HEK293 (cell line): ENCODE measurements at regions of chr9 and their contacts with region 1.

Region 1: GRCh38 chr9:35664531-35665470 is at the start of gene ARHGEF39:
- H3K4me3 ChIP-seq: peak within 1 kb of the TSS; percentile 75
- H3K27ac ChIP-seq: peak within 1 kb of the TSS; percentile 64; the same call in 1 of the 2 replicates
- H3K4me1 ChIP-seq: no peaks in the 10 kb centered on the region
- CTCF ChIP-seq: peak; percentile 62; the same call in 1 of the 2 replicates

Region 2: DNA sequence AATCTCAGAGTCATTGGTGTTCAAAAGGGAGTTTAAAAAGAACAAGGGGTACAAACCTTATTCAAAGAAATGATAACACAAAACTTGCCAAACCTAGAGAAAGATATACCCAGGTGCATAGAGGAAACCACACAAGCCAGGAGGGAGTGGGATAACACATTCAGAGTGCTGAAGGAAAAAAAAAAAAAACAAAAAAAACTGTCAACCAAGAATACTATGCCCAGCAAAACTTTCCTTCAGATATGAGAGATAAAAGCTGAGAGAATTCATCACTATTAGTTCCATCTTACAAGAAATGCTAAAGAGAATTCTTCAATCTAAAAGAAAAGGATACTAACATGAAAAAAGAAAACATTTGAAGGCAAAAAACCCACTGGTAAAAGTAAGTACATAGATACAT is 71.2 kb before region 1 on chr9:
- CTCF ChIA-PET with region 1: no interaction called
- POLR2A ChIA-PET with region 1: no interaction called
- H3K4me3 ChIP-seq: no peak overlapping the region
- H3K27ac ChIP-seq: no peak overlapping the region
- H3K4me1 ChIP-seq: no peaks in the 10 kb centered on the region
- CTCF ChIP-seq: no peak

Region 3: GRCh38 chr9:35603987-35604577 is 60.7 kb before region 1 on chr9:
- CTCF ChIA-PET with region 1: no interaction called
- POLR2A ChIA-PET with region 1: no interaction called
- H3K4me3 ChIP-seq: peak overlapping the region; percentile 54
- H3K27ac ChIP-seq: peak overlapping the region; percentile 43
- H3K4me1 ChIP-seq: no peaks in the 10 kb centered on the region
- CTCF ChIP-seq: peak; percentile 96

Region 4: DNA sequence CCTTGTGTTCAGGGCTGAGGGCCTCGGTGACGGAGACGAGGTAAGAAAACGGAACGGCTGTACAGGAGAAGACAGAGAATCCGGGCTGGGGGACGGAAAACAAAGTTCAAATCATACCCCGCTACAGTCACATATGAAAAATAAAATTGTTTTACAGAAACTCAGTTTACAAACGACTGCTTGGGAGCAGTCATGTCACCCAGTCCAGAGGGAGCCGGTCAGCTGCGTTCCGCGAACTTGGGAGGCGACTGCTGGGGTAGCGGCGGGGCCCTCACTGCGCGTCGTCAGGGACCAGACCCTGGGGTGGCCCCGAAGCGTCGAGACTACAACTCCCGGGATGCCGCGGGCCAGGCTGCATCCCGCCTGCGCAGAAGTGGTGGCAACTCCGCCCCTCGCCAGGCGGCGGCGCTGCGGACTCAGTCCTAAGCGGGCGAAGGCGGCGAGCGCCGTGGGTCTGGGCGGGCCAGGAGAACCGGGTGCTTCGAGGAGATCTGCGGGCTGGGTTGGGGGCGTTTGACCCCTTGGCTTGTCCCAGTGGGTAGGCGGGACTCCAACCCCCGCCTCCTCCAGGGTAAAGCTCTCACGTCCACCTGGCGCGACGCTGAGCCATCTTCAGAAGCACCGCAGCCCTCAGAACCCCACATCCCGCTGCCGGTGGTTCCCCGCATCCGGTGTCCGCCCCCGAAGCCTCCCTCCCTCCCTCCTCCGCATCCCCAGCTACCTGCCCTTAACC is 18.1 kb before region 1 on chr9:
- CTCF ChIA-PET with region 1: interaction called, 22 read pairs
- POLR2A ChIA-PET with region 1: interaction called, 5 read pairs
- H3K4me3 ChIP-seq: peak overlapping the region; percentile 62
- H3K27ac ChIP-seq: peak overlapping the region; percentile 51
- H3K4me1 ChIP-seq: no peaks in the 10 kb centered on the region
- CTCF ChIP-seq: peak; percentile 94

Region 5: DNA sequence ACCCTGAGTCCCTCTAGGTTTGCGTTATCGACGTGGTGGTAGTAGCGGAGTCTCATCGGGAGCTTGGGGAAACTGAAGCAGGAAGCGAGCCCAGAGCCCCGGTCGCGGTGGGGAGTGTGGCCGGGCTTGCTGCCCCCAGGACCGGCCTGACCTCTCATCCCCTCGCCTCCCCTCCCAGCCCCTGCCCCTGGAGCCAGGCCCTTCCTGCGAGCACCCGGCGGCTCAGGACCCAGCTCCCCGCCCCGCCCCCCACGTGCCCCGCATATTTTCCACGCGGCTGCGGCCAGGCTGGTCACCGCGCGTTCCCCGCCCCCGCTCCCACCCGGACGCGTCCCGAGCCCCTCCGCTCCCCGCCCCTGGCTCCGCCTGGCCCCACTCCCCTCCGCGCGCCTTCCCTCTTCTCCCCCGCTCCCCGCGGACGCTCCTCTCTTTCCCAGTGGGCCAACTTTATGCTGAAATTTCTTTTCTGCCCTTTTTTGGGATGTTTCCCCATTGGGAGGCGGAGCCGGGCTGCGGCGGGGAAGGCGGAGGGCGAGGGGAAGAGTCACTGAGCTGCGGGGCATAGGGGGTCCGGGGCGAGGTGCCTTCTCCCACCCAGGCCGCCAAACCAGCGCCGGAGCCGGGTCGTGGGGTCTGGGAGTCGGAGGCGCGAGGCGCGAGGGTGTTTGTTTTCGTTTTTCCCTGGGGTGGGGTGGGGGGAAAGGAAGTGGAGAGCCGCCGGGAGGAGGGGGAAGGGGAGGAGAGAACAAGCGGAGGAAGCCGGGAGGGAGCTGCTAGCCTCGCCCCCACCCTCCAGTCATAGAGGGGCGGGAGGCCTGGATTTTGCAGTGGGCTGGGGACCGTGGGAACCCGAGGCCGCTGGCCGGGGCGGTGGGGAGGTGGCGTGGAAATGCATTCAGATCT is 25.9 kb after region 1 on chr9:
- CTCF ChIA-PET with region 1: interaction called, 157 read pairs
- POLR2A ChIA-PET with region 1: interaction called, 23 read pairs
- H3K4me3 ChIP-seq: peak overlapping the region; percentile 58
- H3K27ac ChIP-seq: peak overlapping the region; percentile 56; the same call in 1 of the 2 replicates
- H3K4me1 ChIP-seq: peaks cover 3% of the 10 kb centered on the region; the same call in 1 of the 2 replicates
- CTCF ChIP-seq: no peak

Region 6: GRCh38 chr9:35741740-35742139 is 76.9 kb after region 1 on chr9:
- CTCF ChIA-PET with region 1: no interaction called
- POLR2A ChIA-PET with region 1: no interaction called
- H3K4me3 ChIP-seq: no peak overlapping the region
- H3K27ac ChIP-seq: no peak overlapping the region
- H3K4me1 ChIP-seq: no peaks in the 10 kb centered on the region
- CTCF ChIP-seq: no peak